ENCODE measurements at regions of chr14 and their contacts with region 1.

Region 1: GRCh38 chr14:73568381-73568781 is 632 bp upstream of the ACOT2 start:
- DNase-seq: peak in 2 of 4 experiments; percentile 0
- ATAC-seq: no peak
- H3K4me3 ChIP-seq: no peak overlapping the region
- H3K27ac ChIP-seq: no peak overlapping the region
- H3K4me1 ChIP-seq: no peaks in the 10 kb centered on the region; a peak in 1 of 5 replicates
- H3K27me3 ChIP-seq: no peaks in the 10 kb centered on the region
- CTCF ChIP-seq: no peak
- EP300 ChIP-seq: no peak
- POLR2A ChIP-seq: no peak
- RAD21 ChIP-seq: no peak

Region 2: DNA sequence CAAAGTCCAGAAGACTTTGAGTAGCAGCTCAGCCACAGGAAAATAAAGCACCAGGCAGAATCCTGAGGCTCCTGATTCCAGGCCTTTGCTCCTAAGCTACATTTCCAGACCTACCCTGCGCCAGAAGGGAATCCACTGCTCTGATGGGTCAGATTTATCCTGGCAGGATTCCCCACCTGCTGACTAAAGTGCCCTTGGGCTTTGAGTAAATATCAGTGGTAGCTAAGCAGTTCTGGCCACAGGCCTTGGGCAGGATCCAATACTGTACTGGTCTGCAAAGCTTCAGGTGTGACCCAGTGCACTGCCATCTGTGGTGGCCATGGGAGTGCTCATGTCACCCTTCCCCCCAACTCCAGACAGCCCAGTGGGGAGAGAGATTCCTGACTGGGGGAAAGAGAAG is 41.8 kb before region 1 on chr14:
- CTCF ChIA-PET with region 1: no interaction called
- POLR2A ChIA-PET with region 1: no interaction called
- in situ Hi-C with region 1: loop called (anchors 5 kb)
- intact Hi-C with region 1: no loop called
- DNase-seq: peak in 1 of 4 experiments; percentile 0
- ATAC-seq: no peak
- H3K4me3 ChIP-seq: no peak overlapping the region
- H3K27ac ChIP-seq: no peak overlapping the region
- H3K4me1 ChIP-seq: no peaks in the 10 kb centered on the region
- H3K27me3 ChIP-seq: 0 out of 5 replicates have a peak, but pooled peaks cover 0 to 4% of the 10 kb centered on the region in 2 experiments
- CTCF ChIP-seq: no peak
- EP300 ChIP-seq: no peak
- POLR2A ChIP-seq: no peak
- RAD21 ChIP-seq: no peak

Measured in K562 (cell line).